ENCODE measurements at regions of chr4 and their contacts with region 1.

Region 1: GRCh38 chr4:7843831-7844593 is 95.6 kb downstream of the AFAP1 start:
- DNase-seq: peak; percentile 12 to 66 (median 42)
- ATAC-seq: peak; percentile 84
- H3K4me3 ChIP-seq: no peak overlapping the region
- H3K4me3 Mint-ChIP-seq: peak overlapping the region in 2 of 10 donors; percentile 1 to 45
- H3K27ac ChIP-seq: no peak overlapping the region
- H3K27ac Mint-ChIP-seq: peak overlapping the region in 4 of 9 donors; percentile 10 to 62 (median 22)
- H3K4me1 ChIP-seq: peaks cover 4 to 6% of the 10 kb centered on the region in 2 donors
- H3K4me1 Mint-ChIP-seq: peaks cover 17 to 46% (median 40%) of the 10 kb centered on the region in 7 donors
- H3K27me3 ChIP-seq: no peaks in the 10 kb centered on the region
- H3K27me3 Mint-ChIP-seq: no peaks in the 10 kb centered on the region

Region 2: GRCh38 chr4:7770224-7771050 is 73.6 kb before region 1 on chr4:
- CTCF ChIA-PET with region 1: no interaction called
- POLR2A ChIA-PET with region 1: no interaction called
- intact Hi-C with region 1: no loop called
- DNase-seq: peak in 1 of 9 donors; percentile 4
- ATAC-seq: no peak
- H3K4me3 ChIP-seq: peak overlapping the region; percentile 30
- H3K4me3 Mint-ChIP-seq: peak overlapping the region; percentile 45 to 86 (median 70)
- H3K27ac ChIP-seq: peak overlapping the region; percentile 47
- H3K27ac Mint-ChIP-seq: peak overlapping the region; percentile 48 to 90 (median 79)
- H3K4me1 ChIP-seq: peaks cover 8 to 16% of the 10 kb centered on the region in 2 donors
- H3K4me1 Mint-ChIP-seq: peaks cover 8 to 37% (median 31%) of the 10 kb centered on the region in 7 donors
- H3K27me3 ChIP-seq: no peaks in the 10 kb centered on the region
- H3K27me3 Mint-ChIP-seq: no peaks in the 10 kb centered on the region

Region 3: GRCh38 chr4:7876201-7876875 is 32.3 kb after region 1 on chr4:
- CTCF ChIA-PET with region 1: interaction called, 7 read pairs
- POLR2A ChIA-PET with region 1: interaction called, 4 read pairs
- intact Hi-C with region 1: loop called in 1 of 2 experiments (anchors 1 kb)
- DNase-seq: peak in 3 of 9 donors; percentile 11 to 21 (median 15)
- ATAC-seq: peak; percentile 64
- H3K4me3 ChIP-seq: peak overlapping the region; percentile 15
- H3K4me3 Mint-ChIP-seq: peak overlapping the region; percentile 8 to 78 (median 66)
- H3K27ac ChIP-seq: peak overlapping the region; percentile 44
- H3K27ac Mint-ChIP-seq: peak overlapping the region; percentile 56 to 98 (median 80)
- H3K4me1 ChIP-seq: peaks cover 5 to 22% of the 10 kb centered on the region in 2 donors
- H3K4me1 Mint-ChIP-seq: peaks cover 19 to 82% (median 72%) of the 10 kb centered on the region in 7 donors
- H3K27me3 ChIP-seq: no peaks in the 10 kb centered on the region
- H3K27me3 Mint-ChIP-seq: no peaks in the 10 kb centered on the region

Measured in naive thymus-derived CD4-positive, alpha-beta T cell (primary cell).